ENCODE measurements at regions of chr18 and their contacts with region 1.

Region 1: GRCh38 chr18:37385846-37386778 is 179.5 kb downstream of the CELF4 start:
- H3K4me3 Mint-ChIP-seq: no peak overlapping the region
- H3K27ac Mint-ChIP-seq: no peak overlapping the region
- H3K4me1 Mint-ChIP-seq: no peaks in the 10 kb centered on the region
- H3K27me3 Mint-ChIP-seq: peaks cover 9% of the 10 kb centered on the region

Region 2: GRCh38 chr18:37537868-37538525 is 151.9 kb after region 1 on chr18:
- intact Hi-C with region 1: loop called (anchors 5 kb)
- H3K4me3 Mint-ChIP-seq: no peak overlapping the region
- H3K27ac Mint-ChIP-seq: no peak overlapping the region
- H3K4me1 Mint-ChIP-seq: no peaks in the 10 kb centered on the region
- H3K27me3 Mint-ChIP-seq: peaks cover 27% of the 10 kb centered on the region